ENCODE measurements at regions of chr4 and their contacts with region 1.

Region 1: DNA sequence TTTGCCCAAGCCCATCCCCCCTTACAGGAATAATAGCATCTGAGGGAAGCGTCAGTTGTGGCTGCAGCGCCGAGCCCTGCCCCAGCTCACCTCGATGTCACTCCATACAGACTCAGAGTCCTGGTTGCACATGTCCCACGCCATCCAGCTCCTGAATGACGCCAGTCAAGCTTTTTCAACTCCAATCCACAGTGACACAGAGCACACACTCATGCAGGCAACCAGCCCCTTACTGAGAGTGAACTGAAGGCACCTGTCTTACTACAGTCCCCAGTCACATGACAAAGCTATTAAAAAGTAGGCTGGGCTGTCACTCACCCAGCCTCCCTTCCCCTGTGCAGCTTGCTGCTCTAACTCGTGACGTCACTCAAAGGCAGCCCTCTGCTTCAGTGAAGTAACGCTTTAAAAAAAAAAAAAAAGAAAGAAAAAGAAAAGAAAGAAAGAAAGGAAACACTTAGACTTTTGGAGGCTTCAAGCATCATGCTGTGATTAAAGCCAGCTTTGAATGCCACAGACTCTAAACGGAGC is at the start of gene PPARGC1A:
- DNase-seq: peak; percentile 76
- total RNA-seq, gene PPARGC1A: 99.6 TPM

Region 2: DNA sequence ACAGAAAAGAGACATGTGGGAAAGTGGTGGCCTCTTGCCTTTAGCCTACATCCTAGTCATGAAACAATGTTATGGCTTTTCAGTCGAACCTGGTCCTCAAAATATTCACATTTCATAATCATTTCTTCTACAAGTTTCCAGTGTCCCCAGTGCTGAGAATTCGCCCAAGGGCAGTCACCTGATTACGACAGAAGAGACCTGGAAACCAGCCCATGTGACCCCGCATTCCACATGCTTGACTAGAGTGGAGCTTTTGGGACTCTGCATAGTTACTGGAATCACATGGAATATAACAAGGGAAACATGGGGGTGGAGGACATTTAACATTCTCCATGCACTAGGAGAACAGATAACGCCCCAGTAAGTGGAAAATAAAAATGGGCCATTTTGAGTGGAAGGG is 100.1 kb before region 1 on chr4:
- intact Hi-C with region 1: loop called (anchors 5 kb)
- DNase-seq: peak; percentile 82

Region 3: GRCh38 chr4:24244663-24245490 is 355.0 kb after region 1 on chr4:
- intact Hi-C with region 1: loop called (anchors 5 kb)
- DNase-seq: peak; percentile 80

Measured in cardiac septum (tissue), 1 donor.